Mammary epithelial cell (primary cell): ENCODE measurements at regions of chr1 and their contacts with region 1.

Region 1: GRCh38 chr1:229920683-229921082 is 146.4 kb upstream of the GALNT2 start:
- DNase-seq: no peak
- H3K4me3 ChIP-seq: no peak overlapping the region
- H3K27ac ChIP-seq: no peak overlapping the region
- H3K4me1 ChIP-seq: no peaks in the 10 kb centered on the region
- H3K27me3 ChIP-seq: peaks cover 2% of the 10 kb centered on the region
- CTCF ChIP-seq: no peak

Region 2: GRCh38 chr1:229325853-229326502 is 594.7 kb before region 1 on chr1:
- CTCF ChIA-PET with region 1: no interaction called
- dilution Hi-C with region 1: no loop called
- in situ Hi-C with region 1: no loop called
- intact Hi-C with region 1: no loop called
- DNase-seq: no peak
- H3K4me3 ChIP-seq: no peak overlapping the region
- H3K27ac ChIP-seq: no peak overlapping the region
- H3K4me1 ChIP-seq: no peaks in the 10 kb centered on the region
- H3K27me3 ChIP-seq: no peaks in the 10 kb centered on the region
- CTCF ChIP-seq: no peak

Region 3: GRCh38 chr1:229403573-229403972 is 517.1 kb before region 1 on chr1:
- CTCF ChIA-PET with region 1: no interaction called
- dilution Hi-C with region 1: no loop called
- in situ Hi-C with region 1: no loop called
- intact Hi-C with region 1: no loop called
- DNase-seq: no peak
- H3K4me3 ChIP-seq: no peak overlapping the region
- H3K27ac ChIP-seq: no peak overlapping the region
- H3K4me1 ChIP-seq: peaks cover 10% of the 10 kb centered on the region
- H3K27me3 ChIP-seq: peaks cover 7% of the 10 kb centered on the region
- CTCF ChIP-seq: no peak

Region 4: DNA sequence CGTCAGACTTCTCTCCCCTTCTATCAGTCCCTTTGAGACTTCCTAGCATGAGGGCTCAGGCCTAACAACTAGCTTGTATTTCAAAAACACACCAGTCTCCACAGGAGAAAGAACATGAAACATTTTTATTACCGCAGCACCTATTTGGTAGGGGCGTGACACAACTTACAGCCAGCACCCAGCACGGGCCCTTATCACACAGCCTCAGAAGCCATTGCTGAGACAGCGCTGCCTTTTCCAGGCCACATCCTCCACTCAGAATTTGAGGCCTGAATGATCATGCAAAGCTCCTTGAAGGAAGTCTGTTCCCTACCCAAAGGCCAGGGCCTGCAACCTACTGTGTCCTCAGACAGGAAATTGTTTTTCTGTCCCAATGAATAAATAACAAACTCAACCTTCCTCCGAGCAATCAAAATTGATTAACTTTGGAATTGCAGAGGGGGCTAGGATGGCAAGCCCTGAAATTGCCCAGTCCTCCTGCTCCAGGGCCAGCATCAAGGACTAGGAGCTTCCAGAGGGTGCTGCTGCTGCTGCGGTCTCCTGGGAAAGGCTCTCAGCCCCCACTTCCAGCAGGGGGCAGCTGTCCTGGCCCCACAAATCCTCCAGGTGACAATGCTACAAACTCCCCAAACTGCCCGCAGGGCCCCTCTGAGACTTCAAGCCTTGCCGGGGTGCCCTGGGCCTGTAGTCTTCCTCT is 52.1 kb after region 1 on chr1:
- CTCF ChIA-PET with region 1: no interaction called
- dilution Hi-C with region 1: no loop called
- in situ Hi-C with region 1: no loop called
- intact Hi-C with region 1: no loop called
- DNase-seq: no peak
- H3K4me3 ChIP-seq: no peak overlapping the region
- H3K27ac ChIP-seq: no peak overlapping the region
- H3K4me1 ChIP-seq: no peaks in the 10 kb centered on the region
- H3K27me3 ChIP-seq: no peaks in the 10 kb centered on the region
- CTCF ChIP-seq: peak; percentile 8 to 25

Region 5: DNA sequence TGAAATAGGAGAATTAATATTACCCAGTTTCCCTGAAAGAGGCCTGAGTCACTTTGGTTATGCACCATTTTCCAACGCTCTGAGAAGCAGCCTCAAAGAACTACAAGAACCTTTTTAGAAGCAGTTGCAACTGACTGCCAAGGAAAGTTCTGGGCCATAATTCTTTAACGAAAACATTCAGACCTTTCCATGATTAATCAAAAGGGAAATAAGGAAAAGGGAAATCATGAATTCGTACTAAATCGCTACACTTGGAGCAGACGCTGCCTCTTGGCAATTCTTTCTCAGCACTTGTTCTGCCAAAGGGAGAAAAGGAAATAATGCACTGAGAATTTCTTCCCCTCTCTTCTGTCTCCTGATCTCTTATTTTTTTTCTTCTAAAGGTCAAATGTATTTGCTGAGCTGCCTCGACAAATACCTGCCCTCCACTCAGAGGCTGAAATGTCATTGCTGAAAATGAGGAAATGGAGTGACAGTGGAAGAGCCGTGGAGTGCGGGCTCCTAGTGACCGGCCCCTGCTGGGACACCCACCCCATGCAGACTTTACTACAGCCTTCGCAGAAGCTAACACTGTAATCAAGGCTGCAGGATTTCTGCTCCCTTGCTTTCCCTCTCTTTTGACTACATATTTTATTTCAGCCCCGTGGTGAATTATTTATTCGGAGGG is 78.5 kb after region 1 on chr1:
- CTCF ChIA-PET with region 1: no interaction called
- dilution Hi-C with region 1: loop called (anchors 10 kb)
- in situ Hi-C with region 1: no loop called
- intact Hi-C with region 1: no loop called
- DNase-seq: no peak
- H3K4me3 ChIP-seq: no peak overlapping the region
- H3K27ac ChIP-seq: no peak overlapping the region
- H3K4me1 ChIP-seq: peaks cover 9% of the 10 kb centered on the region
- H3K27me3 ChIP-seq: no peaks in the 10 kb centered on the region
- CTCF ChIP-seq: no peak